ENCODE measurements at regions of chr5 and their contacts with region 1.

Region 1: DNA sequence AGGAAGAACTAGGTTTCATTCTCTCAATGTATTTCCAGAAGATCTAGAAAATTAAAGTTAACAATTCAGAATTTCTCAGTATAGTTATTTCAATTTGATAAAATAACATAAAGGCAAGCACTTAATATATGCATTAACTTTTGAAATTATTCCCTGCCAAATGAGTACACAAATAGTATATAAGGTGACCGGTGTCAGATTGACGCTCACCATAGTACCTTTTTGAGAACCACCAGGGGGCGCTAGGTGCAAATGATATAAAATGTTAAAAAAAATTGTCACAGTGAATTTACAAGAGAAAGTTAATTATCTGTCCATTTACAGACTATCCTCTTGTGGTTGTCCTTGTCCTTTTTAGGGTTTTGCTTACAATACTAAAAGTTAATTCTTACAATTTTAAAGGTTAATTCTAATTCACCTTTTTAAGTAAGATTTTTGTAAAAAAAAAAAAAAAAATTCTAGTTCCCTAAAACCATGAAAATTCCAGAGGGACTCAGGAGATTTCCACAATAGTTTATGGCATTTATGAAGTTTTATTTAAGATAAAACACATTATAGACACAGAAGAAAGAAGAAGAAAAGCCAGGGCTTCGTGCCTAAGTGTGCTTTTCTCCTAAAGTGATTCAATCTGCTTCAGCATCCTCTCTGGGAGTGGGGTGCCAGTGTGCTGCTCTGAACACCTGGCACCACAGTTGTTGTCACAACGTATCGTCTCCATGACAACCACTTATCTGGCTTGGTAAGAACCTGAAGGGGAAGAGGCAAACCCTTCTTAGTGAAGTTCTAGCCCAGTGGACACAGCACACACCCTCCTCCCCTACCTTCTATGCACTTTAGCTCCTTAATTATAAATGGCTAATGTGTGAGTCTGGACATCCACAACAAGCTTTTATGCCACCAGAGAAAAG is 1.7 kb downstream of the ADAMTS16 start:
- DNase-seq: peak in 1 of 3 donors; percentile 33
- ATAC-seq: no peak
- H3K4me3 ChIP-seq: no peak overlapping the region
- H3K27ac ChIP-seq: no peak overlapping the region
- H3K4me1 ChIP-seq: peaks cover 2% of the 10 kb centered on the region
- H3K27me3 ChIP-seq: no peaks in the 10 kb centered on the region

Region 2: DNA sequence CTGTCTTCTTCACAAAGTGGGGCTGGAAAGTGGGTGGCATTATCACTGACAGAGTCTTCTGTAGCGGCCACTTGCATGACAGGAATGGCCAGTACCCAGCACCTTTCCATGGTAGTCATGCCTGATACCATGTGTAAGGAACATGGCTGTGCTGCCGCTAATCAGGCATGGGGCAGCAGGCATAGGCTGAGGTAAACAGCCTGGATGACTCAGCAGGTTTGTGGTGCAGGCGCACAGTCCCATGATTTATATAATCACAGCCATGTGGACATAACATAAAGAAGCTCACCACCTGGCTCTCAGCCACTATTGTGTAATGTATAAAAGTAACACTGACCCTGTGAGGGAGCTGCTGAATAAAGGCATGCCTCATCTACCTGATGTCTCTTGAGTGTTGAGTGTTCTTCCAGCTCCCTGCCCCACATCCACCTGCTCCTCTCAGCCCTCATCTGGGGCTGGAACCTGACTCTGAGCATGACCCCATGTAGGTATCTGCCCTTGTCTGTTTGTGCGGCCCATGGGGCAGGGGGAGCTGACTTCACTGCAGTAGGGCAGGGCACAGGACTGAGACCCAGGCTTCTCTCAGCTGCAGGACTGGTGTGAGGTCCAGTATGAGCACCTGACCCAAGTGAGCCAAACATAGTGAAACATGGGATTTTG is 267.4 kb after region 1 on chr5:
- intact Hi-C with region 1: loop called in 2 of 4 experiments (anchors 5 kb)
- DNase-seq: no peak
- ATAC-seq: no peak
- H3K4me3 ChIP-seq: no peak overlapping the region
- H3K27ac ChIP-seq: no peak overlapping the region
- H3K4me1 ChIP-seq: no peaks in the 10 kb centered on the region
- H3K27me3 ChIP-seq: no peaks in the 10 kb centered on the region

Region 3: DNA sequence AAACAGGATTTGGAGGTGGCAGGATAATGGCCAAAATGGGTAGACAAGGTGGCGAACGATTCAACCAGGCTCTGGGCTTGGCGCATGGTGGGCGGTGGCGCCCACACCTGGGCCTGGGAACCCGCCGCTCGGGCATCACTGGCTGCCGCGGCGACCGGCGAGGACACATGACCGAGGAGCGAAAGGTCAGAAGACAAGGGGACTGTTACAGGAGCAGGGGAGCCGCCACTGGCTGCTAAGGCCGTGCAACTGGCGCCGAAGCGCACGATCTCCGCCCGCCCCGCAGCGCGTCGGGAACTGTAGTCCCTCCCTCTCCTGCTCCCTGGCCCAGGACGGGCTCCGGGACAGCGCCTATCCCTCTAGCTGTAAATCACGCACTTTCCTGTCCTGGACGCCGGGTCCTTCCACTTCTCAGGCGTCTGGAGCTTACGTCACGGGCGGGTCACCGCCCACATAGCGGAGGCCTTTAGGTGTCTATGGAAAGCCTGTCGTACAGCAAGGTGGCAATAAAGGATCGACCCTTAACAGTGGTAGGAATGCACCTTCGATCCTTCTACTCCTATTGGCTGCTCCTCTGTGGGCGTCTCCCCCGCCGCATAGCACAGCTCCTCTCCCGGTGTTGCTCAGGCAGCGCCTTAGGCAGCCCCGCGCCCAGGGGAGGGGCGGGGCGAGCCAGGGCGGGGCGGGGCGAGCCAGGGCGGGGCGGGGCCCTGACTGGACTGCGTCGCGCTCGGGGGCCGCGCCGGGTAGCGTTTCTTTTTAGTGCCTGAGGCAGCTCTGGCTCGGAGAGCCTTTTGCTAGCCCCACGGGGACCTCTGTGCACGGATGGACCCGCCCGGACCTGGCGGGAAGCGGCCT is 280.3 kb after region 1 on chr5 and contains the start of gene ICE1:
- intact Hi-C with region 1: loop called in 3 of 4 experiments (anchors 5 kb)
- DNase-seq: peak; percentile 98 to 99 (median 99)
- ATAC-seq: peak; percentile 99 to 100
- H3K4me3 ChIP-seq: peak within 1 kb of the TSS; percentile 86
- H3K27ac ChIP-seq: peak within 1 kb of the TSS; percentile 91
- H3K4me1 ChIP-seq: peaks cover 6% of the 10 kb centered on the region
- H3K27me3 ChIP-seq: no peaks in the 10 kb centered on the region
- total RNA-seq, gene ICE1: 17.5 to 19.5 (median 18.7) TPM